PC-3 (cell line): ENCODE measurements at regions of chr1 and their contacts with region 1.

Region 1: GRCh38 chr1:193754732-193755427 is 568.5 kb upstream of the B3GALT2 start:
- DNase-seq: peak; percentile 29
- ATAC-seq: no peak
- H3K4me3 ChIP-seq: no peak overlapping the region
- H3K27ac ChIP-seq: no peak overlapping the region
- H3K4me1 ChIP-seq: no peaks in the 10 kb centered on the region
- H3K27me3 ChIP-seq: no peaks in the 10 kb centered on the region
- CTCF ChIP-seq: peak; percentile 50; the same call in 1 of the 2 replicates

Region 2: DNA sequence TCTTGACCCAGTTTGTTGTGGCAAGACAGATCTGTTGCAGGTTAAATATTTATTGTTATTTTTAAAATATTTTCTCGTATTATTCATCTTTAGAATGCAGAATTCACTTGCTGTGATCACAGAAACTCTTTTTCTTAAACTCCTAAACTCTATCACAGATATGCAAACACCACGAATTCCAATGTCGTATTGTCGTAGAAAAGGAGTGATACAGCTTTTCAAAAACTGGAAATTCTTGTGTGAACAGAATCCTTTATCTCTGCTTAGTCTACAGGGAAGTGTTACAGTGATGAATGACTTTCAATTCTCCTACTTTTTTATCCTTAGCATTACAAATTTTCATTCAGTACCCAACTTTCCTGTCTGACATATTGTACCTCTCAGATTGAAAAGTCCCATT is 761.0 kb after region 1 on chr1:
- CTCF ChIA-PET with region 1: no interaction called
- POLR2A ChIA-PET with region 1: interaction called, 17 read pairs
- intact Hi-C with region 1: no loop called
- DNase-seq: no peak
- ATAC-seq: no peak
- H3K4me3 ChIP-seq: no peak overlapping the region
- H3K27ac ChIP-seq: no peak overlapping the region
- H3K4me1 ChIP-seq: no peaks in the 10 kb centered on the region
- H3K27me3 ChIP-seq: no peaks in the 10 kb centered on the region
- CTCF ChIP-seq: no peak